ENCODE measurements at regions of chr1 and their contacts with region 1.

Region 1: GRCh38 chr1:211680752-211681327 is 5.4 kb upstream of the NEK2 start:
- DNase-seq: peak; percentile 83
- ATAC-seq: peak; percentile 74
- H3K4me3 ChIP-seq: no peak overlapping the region
- H3K27ac ChIP-seq: no peak overlapping the region
- H3K4me1 ChIP-seq: peaks cover 49% of the 10 kb centered on the region
- H3K27me3 ChIP-seq: peaks cover 1 to 17% of the 10 kb centered on the region in 2 experiments; a peak in 3 of 5 replicates
- CTCF ChIP-seq: peak; percentile 88
- EP300 ChIP-seq: no peak
- POLR2A ChIP-seq: no peak
- RAD21 ChIP-seq: peak; percentile 86

Region 2: GRCh38 chr1:211732293-211732980 is 51.6 kb after region 1 on chr1:
- CTCF ChIA-PET with region 1: no interaction called
- POLR2A ChIA-PET with region 1: no interaction called
- in situ Hi-C with region 1: no loop called
- intact Hi-C with region 1: no loop called
- DNase-seq: no peak
- ATAC-seq: no peak
- H3K4me3 ChIP-seq: no peak overlapping the region
- H3K27ac ChIP-seq: no peak overlapping the region
- H3K4me1 ChIP-seq: peaks cover 34% of the 10 kb centered on the region
- H3K27me3 ChIP-seq: peaks cover 0 to 42% of the 10 kb centered on the region in 2 experiments; a peak in 4 of 5 replicates
- CTCF ChIP-seq: no peak
- EP300 ChIP-seq: no peak
- POLR2A ChIP-seq: no peak
- RAD21 ChIP-seq: no peak

Region 3: GRCh38 chr1:211830330-211831142 is 149.7 kb after region 1 on chr1 and contains the start of gene LPGAT1:
- CTCF ChIA-PET with region 1: interaction called, 5 read pairs
- POLR2A ChIA-PET with region 1: interaction called, 3 read pairs
- in situ Hi-C with region 1: no loop called
- intact Hi-C with region 1: loop called (anchors 1 kb)
- DNase-seq: peak; percentile 24
- ATAC-seq: peak; percentile 94
- H3K4me3 ChIP-seq: peak within 1 kb of the TSS; percentile 81 to 95 (median 82)
- H3K27ac ChIP-seq: peak within 1 kb of the TSS; percentile 74
- H3K4me1 ChIP-seq: peaks cover 27% of the 10 kb centered on the region
- H3K27me3 ChIP-seq: no peaks in the 10 kb centered on the region
- CTCF ChIP-seq: peak; percentile 84
- EP300 ChIP-seq: peak in 1 of 2 experiments; percentile 12; a peak in 1 of 4 replicates
- POLR2A ChIP-seq: peak; percentile 12 to 43; a peak in 2 of 4 replicates
- RAD21 ChIP-seq: peak; percentile 93
- total RNA-seq, gene LPGAT1: 48.3 and 51.0 TPM in 2 replicates

Region 4: GRCh38 chr1:211928993-211929637 is 248.3 kb after region 1 on chr1:
- CTCF ChIA-PET with region 1: no interaction called
- POLR2A ChIA-PET with region 1: no interaction called
- in situ Hi-C with region 1: no loop called
- intact Hi-C with region 1: loop called (anchors 5 kb)
- DNase-seq: peak; percentile 84
- ATAC-seq: peak; percentile 91
- H3K4me3 ChIP-seq: peak overlapping the region; percentile 36 to 61 (median 41)
- H3K27ac ChIP-seq: peak overlapping the region; percentile 72
- H3K4me1 ChIP-seq: peaks cover 34% of the 10 kb centered on the region
- H3K27me3 ChIP-seq: no peaks in the 10 kb centered on the region
- CTCF ChIP-seq: no peak
- EP300 ChIP-seq: peak in 1 of 2 experiments; percentile 60; a peak in 1 of 4 replicates
- POLR2A ChIP-seq: 0 out of 4 replicates have a peak, but pooled peaks of 1 of the 2 experiments have one; percentile 29
- RAD21 ChIP-seq: no peak

Region 5: DNA sequence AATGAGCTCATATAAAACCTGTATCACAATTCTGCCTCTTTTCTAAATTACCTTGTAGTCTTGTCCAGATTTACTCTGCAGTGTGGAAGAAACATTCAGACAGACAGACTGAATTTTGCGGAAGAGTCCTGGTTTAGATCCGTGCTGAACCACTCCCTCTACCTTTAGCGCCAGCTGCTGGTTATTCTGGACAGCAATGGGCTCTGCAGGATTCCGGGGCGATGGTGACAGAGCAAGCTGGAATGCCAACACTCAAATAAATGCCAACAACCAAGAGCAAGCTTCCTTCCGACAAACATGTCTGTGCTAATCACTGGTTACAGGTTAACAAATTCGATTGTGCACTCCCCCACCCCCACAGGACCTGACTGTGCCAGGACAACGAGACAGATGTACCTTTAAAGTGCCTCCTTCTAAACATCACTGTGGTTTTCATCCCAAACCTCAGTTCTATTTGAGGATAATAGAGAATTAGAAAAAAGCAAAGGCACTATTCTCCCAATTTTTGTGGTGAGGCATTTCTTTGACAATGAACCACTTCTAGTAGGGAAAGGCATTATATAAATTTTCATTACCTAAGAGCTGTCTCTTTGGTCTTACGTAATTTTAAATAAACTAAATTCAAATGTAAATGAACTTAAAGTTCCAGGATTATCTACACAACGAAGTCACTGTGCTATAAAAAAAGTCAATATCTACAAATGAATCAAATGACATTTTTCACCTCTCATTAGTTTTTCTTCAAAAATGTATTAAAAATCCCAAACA is 264.1 kb after region 1 on chr1:
- CTCF ChIA-PET with region 1: interaction called, 13 read pairs
- POLR2A ChIA-PET with region 1: interaction called, 3 read pairs
- in situ Hi-C with region 1: no loop called
- intact Hi-C with region 1: loop called (anchors 2 kb)
- DNase-seq: peak; percentile 94
- ATAC-seq: peak; percentile 99
- H3K4me3 ChIP-seq: no peak overlapping the region
- H3K27ac ChIP-seq: no peak overlapping the region
- H3K4me1 ChIP-seq: peaks cover 31% of the 10 kb centered on the region
- H3K27me3 ChIP-seq: no peaks in the 10 kb centered on the region
- CTCF ChIP-seq: peak; percentile 96
- EP300 ChIP-seq: peak in 1 of 2 experiments; percentile 58; a peak in 1 of 4 replicates
- POLR2A ChIP-seq: no peak
- RAD21 ChIP-seq: peak; percentile 92

Region 6: DNA sequence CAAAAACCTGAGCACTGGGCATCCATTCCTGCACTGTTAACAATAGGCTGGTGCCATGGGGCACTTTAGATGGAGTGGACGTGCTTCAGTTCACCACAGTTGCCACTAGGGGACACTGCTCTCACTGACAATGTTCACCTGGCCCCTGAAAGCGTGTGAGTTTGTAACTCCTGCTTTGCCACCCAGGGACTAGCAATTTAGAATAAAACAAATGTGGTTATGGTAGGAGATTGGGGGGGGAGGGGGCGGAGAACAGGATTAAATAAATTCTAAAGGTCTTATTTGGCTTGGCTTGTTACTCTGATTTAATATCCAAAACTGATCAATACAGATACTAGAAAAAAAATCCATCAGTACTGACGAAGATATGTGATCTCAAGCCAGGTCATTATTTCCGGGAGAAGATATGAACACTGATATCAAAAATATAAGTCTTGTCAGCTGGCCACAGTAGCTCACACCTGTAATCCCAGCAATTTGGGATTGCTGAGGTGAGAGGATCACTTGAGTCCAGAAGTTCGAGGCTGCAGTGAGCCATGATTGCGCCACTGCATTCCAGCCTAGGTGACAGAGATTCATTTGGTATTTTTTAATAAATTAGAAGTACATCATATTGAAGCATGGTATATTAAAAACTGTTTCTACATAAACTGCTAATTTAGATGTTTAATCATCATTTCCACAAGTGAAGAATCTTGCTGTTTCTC is 331.3 kb after region 1 on chr1:
- CTCF ChIA-PET with region 1: interaction called, 3 read pairs
- POLR2A ChIA-PET with region 1: no interaction called
- in situ Hi-C with region 1: no loop called
- intact Hi-C with region 1: loop called (anchors 2 kb)
- DNase-seq: peak; percentile 63
- ATAC-seq: peak; percentile 98
- H3K4me3 ChIP-seq: no peak overlapping the region
- H3K27ac ChIP-seq: no peak overlapping the region
- H3K4me1 ChIP-seq: peaks cover 10% of the 10 kb centered on the region
- H3K27me3 ChIP-seq: no peaks in the 10 kb centered on the region
- CTCF ChIP-seq: peak; percentile 93
- EP300 ChIP-seq: no peak
- POLR2A ChIP-seq: no peak
- RAD21 ChIP-seq: peak; percentile 64; the same call in 1 of the 2 replicates

Region 7: GRCh38 chr1:212035123-212035834 is 354.4 kb after region 1 on chr1 and contains the starts of genes DTL and INTS7:
- CTCF ChIA-PET with region 1: interaction called, 4 read pairs
- POLR2A ChIA-PET with region 1: interaction called, 20 read pairs
- in situ Hi-C with region 1: no loop called
- intact Hi-C with region 1: loop called (anchors 1 kb)
- DNase-seq: peak; percentile 99
- ATAC-seq: peak; percentile 94
- H3K4me3 ChIP-seq: peak within 1 kb of the TSS; percentile 83 to 92 (median 89)
- H3K27ac ChIP-seq: peak within 1 kb of the TSS; percentile 93
- H3K4me1 ChIP-seq: peaks cover 62% of the 10 kb centered on the region
- H3K27me3 ChIP-seq: no peaks in the 10 kb centered on the region; a peak in 1 of 5 replicates
- CTCF ChIP-seq: peak; percentile 98
- EP300 ChIP-seq: no peak; a peak in 1 of 4 replicates
- POLR2A ChIP-seq: peak; percentile 93 to 94
- RAD21 ChIP-seq: peak; percentile 82
- total RNA-seq, gene DTL: 32.8 and 43.1 TPM in 2 replicates
- total RNA-seq, gene INTS7: 22.4 and 32.7 TPM in 2 replicates

Region 8: GRCh38 chr1:212291505-212292134 is 610.8 kb after region 1 on chr1:
- CTCF ChIA-PET with region 1: no interaction called
- POLR2A ChIA-PET with region 1: no interaction called
- in situ Hi-C with region 1: no loop called
- intact Hi-C with region 1: loop called (anchors 10 kb)
- DNase-seq: peak; percentile 50
- ATAC-seq: peak; percentile 88
- H3K4me3 ChIP-seq: no peak overlapping the region
- H3K27ac ChIP-seq: no peak overlapping the region
- H3K4me1 ChIP-seq: peaks cover 62% of the 10 kb centered on the region
- H3K27me3 ChIP-seq: no peaks in the 10 kb centered on the region; a peak in 1 of 5 replicates
- CTCF ChIP-seq: peak; percentile 81
- EP300 ChIP-seq: no peak
- POLR2A ChIP-seq: no peak
- RAD21 ChIP-seq: peak; percentile 66; the same call in 1 of the 2 replicates

Measured in HepG2 (cell line).